ENCODE measurements at regions of chr20 and their contacts with region 1.

Region 1: GRCh38 chr20:297098-297924 is at the start of gene ZCCHC3:
- DNase-seq: peak; percentile 96
- H3K4me3 ChIP-seq: peak within 1 kb of the TSS; percentile 87 to 93
- H3K27ac ChIP-seq: peak within 1 kb of the TSS; percentile 86 to 95
- H3K4me1 ChIP-seq: peaks cover 20 to 24% of the 10 kb centered on the region in 2 experiments
- H3K27me3 ChIP-seq: no peaks in the 10 kb centered on the region
- CTCF ChIP-seq: peak; percentile 21; the same call in 1 of the 2 replicates
- EP300 ChIP-seq: peak in 1 of 2 experiments; percentile 26; a peak in 1 of 4 replicates
- RAD21 ChIP-seq: peak; percentile 31
- polyA plus RNA-seq, gene ZCCHC3: 9.0 and 9.5 TPM in 2 replicates

Region 2: GRCh38 chr20:278607-279571 is 18.4 kb before region 1 on chr20:
- CTCF ChIA-PET with region 1: no interaction called
- POLR2A ChIA-PET with region 1: no interaction called
- DNase-seq: no peak
- H3K4me3 ChIP-seq: no peak overlapping the region
- H3K27ac ChIP-seq: no peak overlapping the region
- H3K4me1 ChIP-seq: no peaks in the 10 kb centered on the region
- H3K27me3 ChIP-seq: no peaks in the 10 kb centered on the region
- CTCF ChIP-seq: no peak
- EP300 ChIP-seq: no peak
- RAD21 ChIP-seq: no peak

Region 3: DNA sequence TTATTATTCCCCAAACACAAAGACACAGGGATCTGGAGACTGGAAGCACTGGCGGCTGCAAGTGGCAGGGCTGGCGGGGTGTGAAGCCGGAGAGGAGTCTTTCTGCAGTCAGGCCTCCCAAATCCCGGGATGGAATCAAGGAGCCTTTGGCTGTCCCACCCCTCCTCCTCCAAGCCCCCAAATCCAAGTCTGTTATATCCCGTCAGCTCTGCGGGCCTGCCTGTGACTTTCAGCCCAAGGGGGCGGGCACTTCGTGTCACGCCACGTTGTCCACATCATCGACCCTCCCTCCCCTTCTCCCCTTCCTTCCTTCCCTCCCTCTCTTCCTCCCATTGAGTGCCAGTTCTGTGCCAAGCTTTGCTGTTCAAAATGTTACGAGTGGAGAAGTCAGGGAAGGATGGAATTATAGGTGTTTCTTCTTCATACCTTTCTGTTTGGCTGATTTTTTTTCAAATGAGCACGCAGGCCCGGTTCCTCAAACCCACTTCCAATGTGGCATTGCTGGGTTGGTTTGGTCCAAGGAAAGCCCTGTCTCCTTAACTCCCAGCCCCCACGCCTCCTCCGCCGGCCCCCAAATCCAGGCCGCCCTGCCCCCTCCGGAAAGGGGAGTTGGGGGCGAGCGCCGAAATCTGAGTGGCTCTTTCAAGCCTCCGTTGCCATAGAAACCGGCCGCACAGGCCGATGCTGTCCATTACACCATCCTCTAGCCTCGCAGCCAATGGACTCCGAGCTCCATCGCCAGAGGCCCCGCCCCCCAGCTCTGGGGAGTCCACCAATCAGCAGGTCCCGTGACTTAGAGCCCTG is 12.7 kb after region 1 on chr20:
- CTCF ChIA-PET with region 1: interaction called, 14 read pairs
- POLR2A ChIA-PET with region 1: interaction called, 15 read pairs
- DNase-seq: peak; percentile 97
- H3K4me3 ChIP-seq: peak overlapping the region; percentile 53 to 69
- H3K27ac ChIP-seq: peak overlapping the region; percentile 97 to 99
- H3K4me1 ChIP-seq: peaks cover 15 to 26% of the 10 kb centered on the region in 2 experiments; a peak in 2 of 4 replicates
- H3K27me3 ChIP-seq: no peaks in the 10 kb centered on the region
- CTCF ChIP-seq: no peak
- EP300 ChIP-seq: no peak
- RAD21 ChIP-seq: no peak